MCF 10A (cell line): ENCODE measurements at regions of chr14 and their contacts with region 1.

Region 1: DNA sequence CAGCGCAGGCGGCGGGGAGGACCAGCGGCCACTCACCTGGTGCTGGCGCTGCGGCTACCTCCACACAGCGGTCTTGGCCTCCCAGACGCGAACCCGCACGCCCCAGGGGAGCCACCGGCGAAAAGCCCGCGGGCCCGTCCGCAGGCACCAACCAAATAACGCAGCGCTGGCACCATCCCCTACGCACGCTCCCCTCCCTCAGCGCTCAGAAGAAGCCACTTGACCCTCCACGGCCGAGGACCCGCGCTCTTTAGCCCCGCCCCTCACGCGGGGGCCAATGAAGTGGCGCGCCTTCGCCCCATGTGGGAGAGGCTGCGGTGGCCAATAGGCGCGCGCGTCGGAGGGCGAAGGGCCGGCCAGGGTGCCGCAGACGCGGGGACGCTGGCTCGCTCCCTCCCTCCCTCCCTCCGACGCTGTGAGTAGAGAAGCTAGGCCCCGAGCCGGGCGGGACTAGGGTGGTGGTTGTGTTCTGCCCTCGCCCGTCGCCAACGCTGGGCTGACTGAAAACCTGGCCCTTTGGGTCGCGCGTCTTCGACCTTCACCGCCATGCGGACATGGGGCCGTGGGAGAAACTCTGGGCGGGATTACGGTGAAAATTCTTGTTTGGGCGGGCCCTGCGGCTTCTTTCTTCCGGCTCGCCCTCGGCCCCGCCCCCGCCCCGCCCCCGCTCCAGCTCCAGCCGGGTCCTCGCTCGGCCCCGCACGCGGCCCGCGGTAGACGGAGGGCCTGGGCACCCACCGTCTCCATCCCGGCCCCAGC is at the starts of genes DMAC2L and L2HGDH:
- DNase-seq: peak; percentile 97
- H3K4me3 Mint-ChIP-seq: peak within 1 kb of the TSS; percentile 94
- H3K27ac Mint-ChIP-seq: peak within 1 kb of the TSS; percentile 91
- H3K4me1 Mint-ChIP-seq: peaks cover 18% of the 10 kb centered on the region
- H3K27me3 Mint-ChIP-seq: no peaks in the 10 kb centered on the region
- CTCF ChIP-seq: no peak
- total RNA-seq, gene DMAC2L: 16.3 and 17.6 TPM in 2 replicates
- total RNA-seq, gene L2HGDH: 7.9 TPM in 2 replicates

Region 2: DNA sequence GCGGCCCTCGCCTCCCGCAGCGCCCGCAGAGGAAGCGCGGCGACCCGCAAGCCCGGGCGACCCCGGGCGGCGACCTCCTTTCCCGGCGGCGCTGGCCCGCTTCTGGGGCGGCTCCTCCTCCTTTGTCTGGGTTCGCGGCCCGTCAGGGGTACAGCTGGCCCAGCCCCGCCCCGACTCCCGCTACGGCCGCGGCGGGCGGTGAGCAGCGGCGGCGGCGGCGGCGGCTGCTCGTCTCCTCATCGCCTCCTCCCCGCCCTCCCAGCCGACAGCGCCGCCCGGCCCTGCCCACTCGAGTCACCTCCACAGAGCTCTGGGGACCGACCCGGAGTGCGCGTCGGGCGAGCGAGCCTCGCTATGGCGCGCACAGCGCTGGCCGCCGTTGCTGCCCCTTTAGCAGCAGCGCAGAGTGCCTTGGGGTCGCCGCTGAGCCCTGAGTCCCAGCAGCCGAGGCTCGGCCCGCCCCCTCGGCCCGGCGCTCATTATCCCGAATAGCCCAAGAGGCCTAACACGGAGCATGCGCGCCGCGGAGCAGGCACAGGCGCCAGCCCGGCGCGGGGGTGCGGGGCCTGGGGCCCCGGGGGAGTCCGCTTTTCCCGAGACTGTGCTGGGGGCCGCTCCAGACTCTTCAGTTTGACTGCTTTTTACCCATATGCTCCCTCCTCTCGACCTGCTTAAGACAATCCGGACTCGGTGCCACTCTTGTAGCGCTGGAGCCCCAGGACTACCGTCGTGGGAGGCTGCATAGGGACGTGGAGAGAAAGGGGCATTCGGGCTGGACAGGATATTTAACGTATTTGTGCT is 80.5 kb before region 1 on chr14 and contains the start of gene SOS2:
- CTCF ChIA-PET with region 1: interaction called, 4 read pairs
- POLR2A ChIA-PET with region 1: interaction called, 19 read pairs
- intact Hi-C with region 1: no loop called
- DNase-seq: peak; percentile 83
- H3K4me3 Mint-ChIP-seq: peak within 1 kb of the TSS; percentile 84
- H3K27ac Mint-ChIP-seq: peak within 1 kb of the TSS; percentile 95
- H3K4me1 Mint-ChIP-seq: peaks cover 7% of the 10 kb centered on the region
- H3K27me3 Mint-ChIP-seq: no peaks in the 10 kb centered on the region
- CTCF ChIP-seq: no peak
- total RNA-seq, gene SOS2: 19.0 and 21.5 TPM in 2 replicates

Region 3: DNA sequence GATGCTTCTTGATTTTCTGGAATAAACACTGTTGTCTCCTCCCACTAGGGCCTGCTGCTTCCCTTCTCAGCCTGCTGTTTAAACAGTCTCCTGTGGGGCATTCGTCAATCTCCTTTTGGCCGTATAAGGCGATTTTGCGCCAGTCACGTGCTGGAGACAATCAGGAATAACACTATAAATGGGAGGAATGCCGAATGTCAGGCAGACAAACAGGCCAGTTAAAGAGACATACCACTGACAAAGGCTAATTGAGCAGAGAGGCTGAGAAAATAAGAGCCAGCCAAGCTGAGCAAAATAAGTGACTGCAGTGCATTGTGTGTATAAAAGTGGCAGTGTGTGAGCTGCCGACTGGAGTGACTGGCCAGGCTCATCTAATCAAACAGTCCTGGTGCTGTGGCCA is 23.2 kb after region 1 on chr14:
- CTCF ChIA-PET with region 1: interaction called, 62 read pairs
- POLR2A ChIA-PET with region 1: interaction called, 10 read pairs
- intact Hi-C with region 1: no loop called
- DNase-seq: no peak
- H3K4me3 Mint-ChIP-seq: no peak overlapping the region
- H3K27ac Mint-ChIP-seq: no peak overlapping the region
- H3K4me1 Mint-ChIP-seq: peaks cover 8% of the 10 kb centered on the region
- H3K27me3 Mint-ChIP-seq: no peaks in the 10 kb centered on the region
- CTCF ChIP-seq: no peak

Region 4: DNA sequence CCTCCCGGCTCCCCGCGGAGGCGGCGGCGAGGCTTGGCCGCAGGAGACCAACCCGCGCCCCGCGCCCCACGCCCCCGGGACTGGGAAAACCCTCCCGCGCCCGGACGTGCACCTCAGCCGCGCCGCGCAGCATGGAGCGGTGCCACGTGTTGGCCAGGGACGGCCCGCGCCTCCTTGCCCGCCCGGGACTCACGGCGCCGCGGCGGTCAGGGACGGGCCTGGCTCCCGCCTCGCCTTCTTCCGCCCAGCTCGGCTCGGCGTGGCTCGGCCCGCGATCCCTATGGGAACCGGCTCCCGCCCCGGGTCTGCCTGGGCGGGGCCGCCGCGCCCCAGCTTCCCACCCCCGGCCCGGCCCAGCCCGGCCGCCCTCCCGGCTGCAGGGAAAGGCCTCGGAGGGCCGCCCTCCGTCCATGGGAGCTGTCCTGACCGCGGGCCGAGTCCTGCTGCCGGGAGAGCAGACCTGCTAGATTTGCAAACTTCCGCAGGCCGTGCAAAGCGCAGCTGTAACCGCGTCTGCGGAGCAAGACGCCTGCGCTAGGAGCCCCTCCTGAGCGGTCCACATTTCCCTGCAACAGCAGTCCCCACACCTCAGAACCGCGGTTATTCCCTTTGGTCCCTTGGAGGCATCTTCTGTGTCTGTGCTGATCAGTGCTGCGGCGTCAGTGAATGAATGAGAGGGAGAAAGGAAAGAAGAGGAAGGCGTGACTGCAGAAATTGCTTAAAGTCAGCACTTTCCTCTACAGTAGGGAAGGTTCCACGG is 84.7 kb after region 1 on chr14 and contains the start of gene CDKL1:
- CTCF ChIA-PET with region 1: interaction called, 6 read pairs
- POLR2A ChIA-PET with region 1: interaction called, 14 read pairs
- intact Hi-C with region 1: no loop called
- DNase-seq: peak; percentile 76
- H3K4me3 Mint-ChIP-seq: peak within 1 kb of the TSS; percentile 86
- H3K27ac Mint-ChIP-seq: peak within 1 kb of the TSS; percentile 90
- H3K4me1 Mint-ChIP-seq: peaks cover 18% of the 10 kb centered on the region
- H3K27me3 Mint-ChIP-seq: no peaks in the 10 kb centered on the region
- CTCF ChIP-seq: no peak
- total RNA-seq, gene CDKL1: 14.3 and 26.3 TPM in 2 replicates